Heart right ventricle (tissue), 16 donors: ENCODE measurements at regions of chr9 and their contacts with region 1.

Region 1: DNA sequence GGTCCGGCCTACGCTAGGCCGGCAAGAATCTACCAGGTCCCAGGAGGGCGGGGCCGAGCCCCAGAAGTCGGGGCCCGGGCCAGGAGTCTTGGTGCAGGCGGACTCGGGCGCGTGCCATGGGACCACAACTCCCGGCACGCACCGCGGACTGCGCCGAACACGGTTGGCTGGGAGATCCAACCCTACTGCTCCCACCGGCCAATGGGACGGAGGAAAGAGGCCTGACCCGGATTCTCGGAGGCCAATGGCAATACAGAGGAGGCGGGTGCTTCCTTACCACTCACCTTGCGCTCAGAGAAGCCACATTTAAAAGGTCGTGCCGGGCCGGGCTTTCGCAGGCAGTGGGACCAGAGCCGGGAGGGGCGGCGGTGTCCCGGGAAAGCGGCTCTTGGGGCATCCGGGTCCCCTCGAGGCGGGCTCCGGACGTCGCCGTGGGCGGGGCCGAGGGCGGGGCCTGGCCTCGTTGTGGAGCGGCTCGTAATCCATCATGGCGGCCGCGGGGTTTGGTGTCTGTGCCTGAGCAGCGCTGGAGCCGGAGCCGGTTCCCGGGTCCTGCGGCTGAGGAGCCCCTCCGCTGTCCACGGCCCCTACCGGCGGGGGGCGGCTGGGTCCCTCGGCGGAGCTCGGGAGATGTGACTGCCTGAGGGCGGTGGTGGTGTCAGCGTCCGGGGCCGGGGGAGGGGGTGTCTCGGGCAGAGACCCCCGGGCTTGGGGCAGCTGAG is 19.1 kb downstream of the EXOSC2 start:
- DNase-seq: peak; percentile 98 to 99
- ATAC-seq: peak; percentile 96 to 98 (median 98)
- H3K4me3 ChIP-seq: peak overlapping the region; percentile 86 to 99 (median 96)
- H3K27ac ChIP-seq: peak overlapping the region; percentile 95 to 100 (median 98)
- H3K4me1 ChIP-seq: peaks cover 4 to 46% (median 31%) of the 10 kb centered on the region in 9 donors
- H3K27me3 ChIP-seq: no peaks in the 10 kb centered on the region
- CTCF ChIP-seq: no peak

Region 2: GRCh38 chr9:130770679-130771442 is 58.1 kb after region 1 on chr9:
- intact Hi-C with region 1: loop called in 9 of 10 experiments (anchors 2 to 10 kb)
- DNase-seq: no peak
- ATAC-seq: peak; percentile 44 to 78 (median 74)
- H3K4me3 ChIP-seq: no peak overlapping the region
- H3K27ac ChIP-seq: no peak overlapping the region
- H3K4me1 ChIP-seq: peaks cover 0 to 42% (median 28%) of the 10 kb centered on the region in 9 donors
- H3K27me3 ChIP-seq: no peaks in the 10 kb centered on the region
- CTCF ChIP-seq: peak; percentile 39 to 83 (median 68)

Region 3: GRCh38 chr9:130834371-130835311 is 121.9 kb after region 1 on chr9 and contains the start of gene ABL1:
- intact Hi-C with region 1: loop called in 1 of 10 experiments (anchors 10 kb)
- DNase-seq: peak; percentile 78 to 84
- ATAC-seq: peak; percentile 73 to 92 (median 86)
- H3K4me3 ChIP-seq: peak within 1 kb of the TSS; percentile 36 to 78 (median 68)
- H3K27ac ChIP-seq: peak within 1 kb of the TSS; percentile 92 to 96 (median 94)
- H3K4me1 ChIP-seq: peaks cover 10 to 75% (median 66%) of the 10 kb centered on the region in 9 donors
- H3K27me3 ChIP-seq: no peaks in the 10 kb centered on the region
- CTCF ChIP-seq: no peak
- total RNA-seq, gene ABL1: 27.1 to 48.8 (median 34.0) TPM

Region 4: GRCh38 chr9:130847327-130848217 is 134.8 kb after region 1 on chr9:
- intact Hi-C with region 1: loop called in 1 of 10 experiments (anchors 5 kb)
- DNase-seq: peak; percentile 39 to 84
- ATAC-seq: peak; percentile 87 to 90 (median 87)
- H3K4me3 ChIP-seq: peak overlapping the region in 2 of 10 donors; percentile 5 to 31
- H3K27ac ChIP-seq: peak overlapping the region; percentile 51 to 93 (median 86)
- H3K4me1 ChIP-seq: peaks cover 23 to 74% (median 64%) of the 10 kb centered on the region in 9 donors
- H3K27me3 ChIP-seq: no peaks in the 10 kb centered on the region
- CTCF ChIP-seq: peak in 3 of 9 donors; percentile 25 to 50 (median 45)

Region 5: DNA sequence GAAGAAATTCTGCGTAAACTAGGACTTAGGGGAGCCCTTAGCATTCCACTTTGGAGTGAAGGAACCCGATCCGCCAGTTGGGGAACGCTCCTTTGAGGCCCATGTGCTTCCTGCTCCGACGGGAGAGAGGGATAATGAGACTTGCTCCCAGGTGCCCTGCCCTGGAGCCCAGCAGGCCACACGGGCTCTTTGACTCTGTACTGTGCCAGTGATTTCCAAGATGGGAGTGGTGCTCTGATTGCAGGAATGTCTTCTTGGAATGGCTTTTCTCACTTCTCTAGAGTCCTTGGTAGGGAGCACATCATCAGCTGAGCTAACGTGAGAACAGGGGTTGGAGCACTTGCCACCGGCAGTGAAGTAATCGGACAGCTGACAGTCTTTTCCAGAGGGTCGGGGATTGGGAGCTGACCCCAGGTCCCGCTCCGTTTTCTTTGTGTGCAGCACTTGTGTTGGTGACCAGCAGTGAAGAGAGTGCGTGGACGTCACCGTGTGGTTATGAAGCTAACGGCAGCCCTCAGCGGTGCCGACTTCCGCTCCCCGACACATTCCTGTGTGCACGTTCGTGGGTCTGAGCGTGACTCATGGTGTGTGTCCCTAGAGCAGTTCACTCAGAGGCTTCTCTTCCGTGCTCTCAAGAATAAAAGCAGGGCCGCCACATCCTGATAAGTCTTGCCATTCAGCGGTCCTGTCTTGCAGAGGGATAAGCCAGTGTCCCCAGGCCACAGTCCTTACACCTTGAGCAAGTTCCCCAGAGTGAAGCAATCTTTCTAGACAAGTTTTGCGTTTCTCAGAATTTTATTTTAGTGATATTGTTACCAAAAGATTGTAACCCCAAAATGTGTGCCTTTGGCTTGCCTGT is 148.0 kb after region 1 on chr9:
- intact Hi-C with region 1: loop called (anchors 1 to 5 kb)
- DNase-seq: peak; percentile 79 to 88
- ATAC-seq: peak; percentile 89 to 95 (median 94)
- H3K4me3 ChIP-seq: peak overlapping the region in 5 of 10 donors; percentile 0 to 14 (median 6)
- H3K27ac ChIP-seq: peak overlapping the region in 9 of 10 donors; percentile 50 to 86 (median 75)
- H3K4me1 ChIP-seq: peaks cover 13 to 69% (median 45%) of the 10 kb centered on the region in 9 donors
- H3K27me3 ChIP-seq: no peaks in the 10 kb centered on the region
- CTCF ChIP-seq: peak in 8 of 9 donors; percentile 36 to 81 (median 58)

Region 6: DNA sequence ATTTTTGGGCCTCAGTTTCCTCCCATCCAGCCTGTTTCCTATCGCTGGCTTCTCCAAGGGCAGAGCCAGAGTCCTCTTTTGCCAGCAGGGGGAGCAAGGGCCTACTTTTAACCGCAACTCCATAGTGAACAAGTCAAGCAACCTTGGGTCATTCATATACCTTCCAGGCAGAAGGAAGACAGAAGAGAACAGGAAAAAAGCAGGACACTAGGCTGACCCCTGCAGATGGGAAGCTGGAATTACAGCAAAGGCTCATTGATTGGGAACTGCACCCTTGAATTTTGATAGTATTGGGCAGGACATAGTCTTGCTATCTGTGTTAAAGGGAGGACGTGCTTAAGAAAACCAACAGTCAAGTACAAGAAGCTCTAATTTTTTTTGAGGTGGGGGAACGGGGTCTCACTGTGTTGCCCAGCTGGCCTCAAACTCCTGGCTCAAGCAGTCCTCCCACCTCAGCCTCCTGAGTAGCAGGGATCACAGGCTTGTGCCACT is 153.8 kb after region 1 on chr9:
- intact Hi-C with region 1: loop called in 9 of 10 experiments (anchors 1 to 5 kb)
- DNase-seq: peak in 1 of 2 donors; percentile 75
- ATAC-seq: peak in 5 of 8 donors; percentile 43 to 56 (median 47)
- H3K4me3 ChIP-seq: no peak overlapping the region
- H3K27ac ChIP-seq: peak overlapping the region in 1 of 10 donors; percentile 2
- H3K4me1 ChIP-seq: peaks cover 0 to 74% (median 36%) of the 10 kb centered on the region in 9 donors
- H3K27me3 ChIP-seq: no peaks in the 10 kb centered on the region
- CTCF ChIP-seq: peak; percentile 63 to 85 (median 77)

Region 7: DNA sequence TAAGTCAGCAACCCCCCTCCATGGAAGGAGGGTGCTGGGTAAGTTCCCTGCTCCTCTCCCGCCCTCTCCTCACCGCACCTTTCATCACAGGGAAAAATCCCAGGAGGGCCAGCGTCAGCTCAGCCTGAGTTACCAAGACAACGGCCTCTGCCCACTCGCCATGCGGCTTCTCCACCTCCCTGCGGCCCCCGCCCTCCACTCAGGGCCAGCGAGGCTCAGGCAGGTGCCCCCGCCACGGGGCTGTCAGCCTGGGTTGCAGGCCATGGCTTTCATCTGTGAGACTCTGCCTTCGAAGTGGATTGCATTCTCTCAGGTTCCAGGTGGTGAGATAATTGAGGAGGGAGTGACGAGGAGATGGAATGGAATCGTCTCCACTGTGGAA is 269.0 kb after region 1 on chr9:
- intact Hi-C with region 1: no loop called
- DNase-seq: no peak
- ATAC-seq: no peak
- H3K4me3 ChIP-seq: no peak overlapping the region
- H3K27ac ChIP-seq: no peak overlapping the region
- H3K4me1 ChIP-seq: no peaks in the 10 kb centered on the region
- H3K27me3 ChIP-seq: peaks cover 0 to 27% (median 0%) of the 10 kb centered on the region in 7 donors
- CTCF ChIP-seq: no peak

Region 8: DNA sequence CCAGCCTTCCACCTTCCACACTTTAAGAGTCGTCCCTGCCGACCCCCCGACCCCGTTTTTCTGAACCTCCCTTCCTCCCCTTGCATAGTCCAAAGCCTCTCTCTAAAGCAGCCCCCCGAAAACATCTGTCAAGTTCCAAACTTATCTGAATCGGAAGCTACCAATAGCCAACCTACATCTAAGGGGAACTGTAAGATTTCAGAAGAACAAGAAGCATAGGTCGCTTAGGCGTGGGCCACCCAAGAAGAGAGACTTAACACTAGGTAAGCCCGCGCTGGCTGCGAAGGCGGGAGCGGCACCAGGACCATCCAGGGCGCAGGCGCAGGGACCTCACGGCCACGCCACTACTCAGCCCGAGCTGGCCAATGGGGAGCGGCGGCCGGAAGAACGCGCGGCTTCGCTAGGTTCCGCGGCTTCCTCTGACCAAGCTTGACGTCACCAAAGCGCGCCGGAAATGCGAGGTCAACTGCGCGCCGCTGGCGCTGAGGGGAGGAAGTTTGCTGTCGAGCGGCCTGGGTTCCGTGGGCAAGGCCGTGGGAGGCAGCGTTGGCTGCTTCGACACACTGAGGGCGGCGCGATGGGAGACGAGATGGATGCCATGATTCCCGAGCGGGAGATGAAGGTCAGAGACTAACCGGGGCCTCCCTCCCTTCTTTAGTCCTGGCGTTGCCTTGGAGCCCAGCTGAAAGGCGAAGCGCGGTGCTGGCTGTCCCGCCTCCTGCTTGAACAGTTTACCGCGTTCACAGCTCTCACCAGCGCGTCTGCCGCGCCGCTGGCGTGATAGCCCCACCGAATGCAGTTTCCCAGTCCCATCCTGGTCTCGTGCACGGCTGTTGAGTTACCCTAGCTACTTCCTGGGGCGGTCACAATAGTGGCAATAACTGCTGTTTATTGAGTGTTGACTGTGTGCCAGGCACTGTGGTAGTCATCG is 412.7 kb after region 1 on chr9 and contains the start of gene NUP214:
- intact Hi-C with region 1: loop called in 1 of 10 experiments (anchors 10 kb)
- DNase-seq: peak; percentile 99
- ATAC-seq: peak; percentile 99 to 100 (median 100)
- H3K4me3 ChIP-seq: peak within 1 kb of the TSS; percentile 69 to 97 (median 83)
- H3K27ac ChIP-seq: peak within 1 kb of the TSS; percentile 12 to 92 (median 83)
- H3K4me1 ChIP-seq: peaks cover 3 to 23% (median 17%) of the 10 kb centered on the region in 9 donors
- H3K27me3 ChIP-seq: no peaks in the 10 kb centered on the region
- CTCF ChIP-seq: no peak
- total RNA-seq, gene NUP214: 17.8 to 27.1 (median 23.6) TPM